H1 (cell line): ENCODE measurements at regions of chr7 and their contacts with region 1.

Region 1: DNA sequence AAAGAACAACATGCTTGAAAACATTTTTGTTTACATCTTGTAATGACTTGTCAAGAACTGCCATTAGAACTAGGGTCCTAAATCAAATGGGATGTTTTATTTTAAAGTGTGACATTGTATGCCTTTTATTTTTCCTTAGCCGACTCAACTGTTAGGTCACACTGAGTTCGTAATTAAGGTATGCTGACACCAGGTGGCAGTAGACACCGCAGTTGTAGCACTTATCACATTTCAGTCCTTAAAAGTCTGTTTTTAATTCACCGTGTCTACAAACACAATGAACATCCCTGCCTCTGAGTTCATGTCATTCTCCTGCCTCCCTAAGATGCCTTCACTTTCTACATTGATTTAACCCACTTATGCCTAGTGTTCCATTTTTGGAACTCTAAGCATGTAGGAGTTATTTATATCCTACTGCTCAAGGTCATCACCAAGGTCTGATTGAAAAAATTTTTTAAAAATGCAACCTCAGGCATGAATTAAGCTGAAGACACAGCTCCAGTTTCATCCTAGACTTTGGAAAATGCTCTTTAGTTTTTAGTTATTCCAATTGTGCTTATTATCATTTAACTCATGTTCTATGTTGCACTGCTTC is 186.1 kb downstream of the BMPER start:
- DNase-seq: peak in 1 of 2 experiments; percentile 55
- H3K4me3 ChIP-seq: no peak overlapping the region
- H3K27ac ChIP-seq: no peak overlapping the region
- H3K4me1 ChIP-seq: no peaks in the 10 kb centered on the region
- H3K27me3 ChIP-seq: no peaks in the 10 kb centered on the region
- CTCF ChIP-seq: peak in 2 of 3 experiments; percentile 71 to 78; a peak in 3 of 4 replicates
- EP300 ChIP-seq: no peak
- POLR2A ChIP-seq: no peak
- RAD21 ChIP-seq: peak; percentile 88 to 90

Region 2: GRCh38 chr7:33961948-33962347 is 129.5 kb before region 1 on chr7:
- CTCF ChIA-PET with region 1: interaction called, 11 read pairs
- POLR2A ChIA-PET with region 1: no interaction called
- DNase-seq: no peak
- H3K4me3 ChIP-seq: no peak overlapping the region
- H3K27ac ChIP-seq: no peak overlapping the region
- H3K4me1 ChIP-seq: no peaks in the 10 kb centered on the region
- H3K27me3 ChIP-seq: no peaks in the 10 kb centered on the region
- CTCF ChIP-seq: no peak
- EP300 ChIP-seq: no peak
- POLR2A ChIP-seq: no peak
- RAD21 ChIP-seq: no peak

Region 3: GRCh38 chr7:34058801-34059489 is 32.5 kb before region 1 on chr7:
- CTCF ChIA-PET with region 1: interaction called, 19 read pairs
- POLR2A ChIA-PET with region 1: no interaction called
- DNase-seq: no peak
- H3K4me3 ChIP-seq: no peak overlapping the region
- H3K27ac ChIP-seq: no peak overlapping the region
- H3K4me1 ChIP-seq: peaks cover 3 to 21% (median 12%) of the 10 kb centered on the region in 4 experiments; a peak in 6 of 7 replicates
- H3K27me3 ChIP-seq: no peaks in the 10 kb centered on the region
- CTCF ChIP-seq: no peak
- EP300 ChIP-seq: no peak
- POLR2A ChIP-seq: no peak
- RAD21 ChIP-seq: no peak

Region 4: GRCh38 chr7:34075523-34076370 is 15.7 kb before region 1 on chr7:
- CTCF ChIA-PET with region 1: interaction called, 28 read pairs
- POLR2A ChIA-PET with region 1: no interaction called
- DNase-seq: no peak
- H3K4me3 ChIP-seq: no peak overlapping the region
- H3K27ac ChIP-seq: no peak overlapping the region
- H3K4me1 ChIP-seq: no peaks in the 10 kb centered on the region; a peak in 3 of 7 replicates
- H3K27me3 ChIP-seq: no peaks in the 10 kb centered on the region
- CTCF ChIP-seq: no peak
- EP300 ChIP-seq: no peak
- POLR2A ChIP-seq: no peak
- RAD21 ChIP-seq: no peak

Region 5: DNA sequence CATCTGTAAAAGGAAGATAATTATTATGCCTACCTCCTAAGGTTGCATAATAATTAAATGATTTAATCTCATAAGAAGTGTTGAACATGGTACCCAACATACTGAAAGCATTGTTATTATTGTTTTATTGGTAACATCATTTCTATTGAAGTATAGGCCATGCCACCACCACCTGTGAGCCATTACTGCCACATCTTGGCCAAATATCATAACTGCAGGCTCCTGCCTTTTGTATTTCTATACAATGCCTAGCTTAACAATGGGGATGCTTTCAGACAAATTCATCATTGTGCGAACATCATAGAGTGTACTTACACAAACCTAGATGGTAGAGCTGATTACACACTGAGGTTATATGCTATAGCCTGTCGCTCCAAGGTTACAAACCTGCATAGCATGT is 505.5 kb after region 1 on chr7:
- CTCF ChIA-PET with region 1: interaction called, 16 read pairs
- POLR2A ChIA-PET with region 1: no interaction called
- DNase-seq: no peak
- H3K4me3 ChIP-seq: no peak overlapping the region
- H3K27ac ChIP-seq: no peak overlapping the region
- H3K4me1 ChIP-seq: no peaks in the 10 kb centered on the region; a peak in 1 of 7 replicates
- H3K27me3 ChIP-seq: no peaks in the 10 kb centered on the region
- CTCF ChIP-seq: peak in 2 of 3 experiments; percentile 60 to 72; a peak in 3 of 4 replicates
- EP300 ChIP-seq: no peak
- POLR2A ChIP-seq: no peak
- RAD21 ChIP-seq: peak; percentile 85 to 87